AG04450 (cell line): ENCODE measurements at regions of chr7 and their contacts with region 1.

Region 1: GRCh38 chr7:142811154-142811737 is 40.5 kb downstream of the PRSS2 start:
- DNase-seq: peak; percentile 8
- H3K4me3 ChIP-seq: no peak overlapping the region
- H3K27ac ChIP-seq: no peak overlapping the region
- H3K27me3 ChIP-seq: no peaks in the 10 kb centered on the region
- CTCF ChIP-seq: peak; percentile 71

Region 2: DNA sequence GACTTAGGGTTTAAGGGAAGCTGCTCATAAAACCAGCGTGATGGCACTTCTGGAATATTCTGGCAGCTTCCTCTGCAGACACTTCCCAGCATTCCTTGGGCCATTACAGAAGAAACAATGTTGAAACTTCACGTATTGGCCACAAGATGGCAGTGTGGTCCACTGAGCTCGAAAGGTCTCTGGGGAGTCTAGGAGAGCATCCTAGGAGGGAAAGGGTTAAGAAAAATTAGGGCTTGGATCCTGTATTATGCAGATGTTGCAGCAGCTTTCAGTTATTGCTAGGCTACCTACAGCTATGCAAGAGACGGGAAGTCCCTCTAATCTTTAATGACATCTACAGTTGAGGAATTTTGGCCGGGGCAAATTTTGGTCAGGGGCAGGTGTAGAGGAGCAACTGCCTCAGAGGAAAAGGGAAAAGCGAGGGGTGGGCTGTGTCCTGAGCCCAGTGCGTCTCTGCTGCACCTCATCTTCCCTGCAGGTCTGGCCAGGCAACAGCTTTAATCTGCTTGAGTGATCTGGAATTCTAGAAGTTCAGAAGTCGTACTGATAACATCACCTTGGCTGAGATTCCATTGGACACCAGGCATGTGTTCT is 332.7 kb before region 1 on chr7:
- CTCF ChIA-PET with region 1: interaction called, 14 read pairs
- POLR2A ChIA-PET with region 1: no interaction called
- DNase-seq: no peak
- H3K4me3 ChIP-seq: no peak overlapping the region
- H3K27ac ChIP-seq: no peak overlapping the region
- H3K27me3 ChIP-seq: no peaks in the 10 kb centered on the region
- CTCF ChIP-seq: peak; percentile 61

Region 3: GRCh38 chr7:142523821-142524460 is 287.3 kb before region 1 on chr7:
- CTCF ChIA-PET with region 1: interaction called, 18 read pairs
- POLR2A ChIA-PET with region 1: no interaction called
- DNase-seq: no peak
- H3K4me3 ChIP-seq: no peak overlapping the region
- H3K27ac ChIP-seq: no peak overlapping the region
- H3K27me3 ChIP-seq: peaks cover 15% of the 10 kb centered on the region
- CTCF ChIP-seq: peak; percentile 32; the same call in 1 of the 2 replicates

Region 4: DNA sequence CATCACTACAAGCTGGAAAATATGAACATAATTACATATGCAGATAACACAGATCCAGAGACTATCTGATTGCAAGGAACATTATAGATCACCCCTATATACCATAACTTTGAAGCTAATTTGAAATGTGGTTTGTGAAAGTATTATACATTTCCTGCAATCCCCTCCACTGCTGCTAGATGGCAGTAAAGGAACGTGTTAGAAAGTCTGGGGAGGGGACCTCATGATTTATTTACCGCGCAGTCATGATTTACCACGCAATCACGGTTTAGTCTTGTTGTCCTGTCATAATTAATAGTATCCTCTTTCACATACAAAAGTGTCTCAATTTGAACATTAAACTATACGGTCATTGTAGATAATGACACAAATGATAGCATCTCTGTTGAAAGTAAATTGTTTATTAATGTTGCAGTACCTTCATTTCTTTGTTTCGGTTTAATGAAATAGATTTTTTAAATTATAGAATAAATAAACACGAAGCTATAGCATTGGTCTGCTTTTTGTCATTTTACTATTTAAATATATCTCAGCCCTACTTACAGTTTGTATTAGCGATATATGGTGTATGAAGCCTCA is 207.3 kb before region 1 on chr7:
- CTCF ChIA-PET with region 1: interaction called, 27 read pairs
- POLR2A ChIA-PET with region 1: no interaction called
- DNase-seq: no peak
- H3K4me3 ChIP-seq: no peak overlapping the region; the same call in 1 of the 2 replicates
- H3K27ac ChIP-seq: no peak overlapping the region
- H3K27me3 ChIP-seq: peaks cover 2% of the 10 kb centered on the region
- CTCF ChIP-seq: peak; percentile 87

Region 5: GRCh38 chr7:142632291-142633134 is 178.7 kb before region 1 on chr7:
- CTCF ChIA-PET with region 1: interaction called, 47 read pairs
- POLR2A ChIA-PET with region 1: no interaction called
- DNase-seq: no peak
- H3K4me3 ChIP-seq: no peak overlapping the region
- H3K27ac ChIP-seq: no peak overlapping the region
- H3K27me3 ChIP-seq: peaks cover 2% of the 10 kb centered on the region
- CTCF ChIP-seq: peak; percentile 77

Region 6: DNA sequence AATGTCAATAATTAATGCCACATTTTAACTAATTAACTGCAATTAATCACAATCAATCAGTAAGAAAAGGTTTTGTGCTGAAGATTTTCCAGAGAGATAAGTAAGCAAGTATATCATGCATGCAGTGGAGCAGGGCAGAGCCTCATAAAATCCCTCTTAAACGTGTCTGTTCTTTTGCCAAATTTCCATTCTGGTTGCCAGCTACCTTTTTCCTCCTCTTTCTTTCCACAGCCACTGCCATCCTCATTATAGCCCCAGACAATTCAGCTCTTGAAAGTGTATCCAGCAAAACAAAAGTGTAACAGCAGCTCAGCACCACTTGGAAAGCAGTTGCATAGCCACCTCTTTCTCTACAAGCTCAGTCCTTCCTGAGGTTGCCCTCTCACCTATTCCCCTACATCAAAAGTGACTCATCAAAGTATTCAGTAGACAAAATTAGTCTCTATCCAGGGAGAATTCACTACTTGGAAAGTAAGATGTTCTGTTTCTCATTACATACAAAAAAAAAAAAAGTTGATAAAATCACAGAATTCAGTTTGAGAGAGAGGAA is 16.8 kb after region 1 on chr7:
- CTCF ChIA-PET with region 1: interaction called, 10 read pairs
- POLR2A ChIA-PET with region 1: no interaction called
- DNase-seq: no peak
- H3K4me3 ChIP-seq: no peak overlapping the region
- H3K27ac ChIP-seq: no peak overlapping the region
- H3K27me3 ChIP-seq: no peaks in the 10 kb centered on the region
- CTCF ChIP-seq: no peak